Activated CD4-positive, alpha-beta T cell treated with anti-CD3 and anti-CD28 coated beads for 36 hours (primary cell): ENCODE measurements at regions of chr1 and their contacts with region 1.

Region 1: DNA sequence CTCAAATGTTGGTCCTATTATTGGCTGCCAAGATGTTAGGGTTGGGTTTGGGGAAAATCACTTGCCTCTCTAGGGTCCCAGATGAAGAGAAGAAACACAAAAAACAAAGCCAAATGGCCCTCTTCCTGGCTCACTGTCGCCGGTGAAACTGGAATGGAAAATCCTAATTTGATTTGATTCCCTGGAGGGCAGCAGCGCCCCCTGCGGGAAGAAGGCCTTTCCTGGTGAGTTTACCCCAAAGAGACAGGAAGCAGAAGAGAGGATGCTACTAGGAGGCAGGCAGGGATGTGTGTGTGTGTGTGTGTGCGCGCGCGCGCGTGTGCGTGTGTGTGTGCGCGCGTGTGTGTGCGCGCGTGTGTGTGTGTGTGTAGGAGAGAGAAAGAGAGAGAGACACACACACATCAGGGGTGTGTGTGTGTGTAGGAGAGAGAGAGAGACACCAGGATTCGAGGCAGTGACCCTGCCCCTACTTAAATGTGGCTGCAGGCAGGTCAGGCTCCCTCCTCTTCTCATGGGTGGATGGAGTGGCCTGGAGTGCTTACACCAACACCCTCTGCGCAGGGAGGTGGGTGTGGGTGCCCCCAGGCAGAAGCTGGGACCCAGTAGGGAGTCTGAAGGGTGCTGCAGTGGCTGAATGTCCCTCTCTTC is 3.1 kb upstream of the SELENON start:
- DNase-seq: peak; percentile 93
- ATAC-seq: peak; percentile 61
- H3K4me3 Mint-ChIP-seq: peak overlapping the region; percentile 56
- H3K27ac Mint-ChIP-seq: peak overlapping the region; percentile 95
- H3K4me1 Mint-ChIP-seq: peaks cover 62% of the 10 kb centered on the region
- H3K27me3 Mint-ChIP-seq: no peaks in the 10 kb centered on the region

Region 2: DNA sequence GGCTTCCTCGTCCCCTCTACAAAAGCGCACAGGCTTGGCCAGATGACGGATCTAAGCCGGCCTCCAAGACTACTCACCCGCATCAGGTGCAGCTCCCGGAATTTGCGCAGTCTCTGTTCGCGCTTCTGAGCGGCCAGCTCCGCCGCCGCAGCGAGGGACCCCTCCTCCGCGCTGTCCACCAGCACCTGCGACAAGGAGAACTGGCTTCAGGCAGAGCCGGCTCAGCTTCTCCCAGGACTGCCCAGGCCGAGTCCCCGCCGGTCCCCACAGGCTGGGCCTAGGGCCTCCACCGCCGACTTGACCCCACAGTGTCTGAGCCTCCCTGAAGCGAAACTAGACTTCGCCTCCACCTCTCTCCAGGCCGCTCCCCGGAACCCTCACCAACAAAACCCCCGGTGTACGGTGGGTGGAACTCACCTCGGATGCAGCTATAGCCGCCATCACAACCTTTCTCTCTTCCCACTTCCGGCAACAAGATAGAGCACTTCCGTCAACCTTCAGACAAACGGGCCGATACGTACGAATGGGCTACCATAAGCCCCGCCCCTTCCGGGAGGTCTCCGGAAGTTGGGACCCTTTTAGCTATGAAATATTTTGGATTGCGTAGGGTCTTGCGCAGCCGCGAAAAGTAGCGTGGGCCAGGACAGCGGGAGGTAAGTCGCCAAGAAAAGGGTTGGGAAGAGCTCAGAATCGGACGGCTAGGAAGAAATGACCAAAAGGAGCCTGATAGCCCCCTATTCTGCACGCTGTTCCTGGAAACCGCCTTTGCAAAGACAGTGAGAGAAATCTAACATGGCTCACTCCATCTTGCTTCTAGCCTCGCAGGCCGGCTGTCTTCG is 564.7 kb before region 1 on chr1 and contains the start of gene SYF2:
- CTCF ChIA-PET with region 1: no interaction called
- POLR2A ChIA-PET with region 1: no interaction called
- intact Hi-C with region 1: loop called in 1 of 2 experiments (anchors 5 kb)
- DNase-seq: peak; percentile 92
- ATAC-seq: peak; percentile 92
- H3K4me3 Mint-ChIP-seq: no peak within 1 kb of the TSS
- H3K27ac Mint-ChIP-seq: no peak within 1 kb of the TSS
- H3K4me1 Mint-ChIP-seq: peaks cover 26% of the 10 kb centered on the region
- H3K27me3 Mint-ChIP-seq: no peaks in the 10 kb centered on the region
- total RNA-seq, gene SYF2: 39.0 to 42.4 TPM

Region 3: DNA sequence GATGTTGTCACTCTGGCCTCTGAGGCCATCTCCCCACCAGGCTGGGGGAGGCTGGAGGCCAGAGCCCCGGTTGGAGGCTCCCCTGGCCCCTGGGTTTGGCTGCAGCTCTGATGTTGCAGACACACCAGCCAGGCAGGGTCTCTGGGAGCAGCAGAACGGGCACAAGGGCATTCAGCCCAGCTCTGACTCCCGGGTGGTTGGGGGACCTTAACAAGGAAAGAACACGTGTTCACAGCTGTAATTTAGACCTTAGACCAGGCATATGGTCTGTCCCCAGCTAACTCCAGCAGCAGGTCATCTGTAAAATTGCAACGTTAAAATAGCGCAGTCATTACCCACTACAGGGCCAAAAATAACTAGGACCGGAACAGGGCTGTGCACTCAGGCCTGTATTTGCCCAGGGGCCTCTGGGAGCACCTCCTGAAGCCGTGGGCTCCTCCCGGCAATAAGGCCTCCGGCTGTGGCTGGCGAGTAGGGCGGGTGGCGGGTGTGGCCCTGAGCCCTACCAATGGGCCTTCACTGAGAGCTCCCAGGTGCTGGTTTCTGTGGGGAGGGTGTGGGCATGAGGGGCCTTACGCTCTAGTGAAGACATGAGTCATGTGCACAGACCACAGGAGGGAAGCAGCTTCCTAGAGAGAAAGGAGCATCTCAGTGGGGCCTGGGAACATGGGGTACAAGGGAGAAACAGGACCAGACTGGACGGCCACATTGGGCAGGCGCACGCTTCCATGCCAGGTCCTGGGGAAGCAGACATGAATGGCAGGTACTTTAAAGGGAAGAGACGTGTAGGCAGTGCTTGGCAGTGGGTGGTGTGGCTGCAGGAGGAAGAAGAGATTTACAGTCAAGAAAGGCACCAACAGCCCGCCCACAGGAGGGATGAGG is 247.4 kb before region 1 on chr1:
- CTCF ChIA-PET with region 1: interaction called, 6 read pairs
- POLR2A ChIA-PET with region 1: interaction called, 3 read pairs
- intact Hi-C with region 1: loop called (anchors 5 kb)
- DNase-seq: peak; percentile 90
- ATAC-seq: peak; percentile 96
- H3K4me3 Mint-ChIP-seq: peak overlapping the region; percentile 69
- H3K27ac Mint-ChIP-seq: peak overlapping the region; percentile 98
- H3K4me1 Mint-ChIP-seq: peaks cover 90% of the 10 kb centered on the region
- H3K27me3 Mint-ChIP-seq: no peaks in the 10 kb centered on the region

Region 4: DNA sequence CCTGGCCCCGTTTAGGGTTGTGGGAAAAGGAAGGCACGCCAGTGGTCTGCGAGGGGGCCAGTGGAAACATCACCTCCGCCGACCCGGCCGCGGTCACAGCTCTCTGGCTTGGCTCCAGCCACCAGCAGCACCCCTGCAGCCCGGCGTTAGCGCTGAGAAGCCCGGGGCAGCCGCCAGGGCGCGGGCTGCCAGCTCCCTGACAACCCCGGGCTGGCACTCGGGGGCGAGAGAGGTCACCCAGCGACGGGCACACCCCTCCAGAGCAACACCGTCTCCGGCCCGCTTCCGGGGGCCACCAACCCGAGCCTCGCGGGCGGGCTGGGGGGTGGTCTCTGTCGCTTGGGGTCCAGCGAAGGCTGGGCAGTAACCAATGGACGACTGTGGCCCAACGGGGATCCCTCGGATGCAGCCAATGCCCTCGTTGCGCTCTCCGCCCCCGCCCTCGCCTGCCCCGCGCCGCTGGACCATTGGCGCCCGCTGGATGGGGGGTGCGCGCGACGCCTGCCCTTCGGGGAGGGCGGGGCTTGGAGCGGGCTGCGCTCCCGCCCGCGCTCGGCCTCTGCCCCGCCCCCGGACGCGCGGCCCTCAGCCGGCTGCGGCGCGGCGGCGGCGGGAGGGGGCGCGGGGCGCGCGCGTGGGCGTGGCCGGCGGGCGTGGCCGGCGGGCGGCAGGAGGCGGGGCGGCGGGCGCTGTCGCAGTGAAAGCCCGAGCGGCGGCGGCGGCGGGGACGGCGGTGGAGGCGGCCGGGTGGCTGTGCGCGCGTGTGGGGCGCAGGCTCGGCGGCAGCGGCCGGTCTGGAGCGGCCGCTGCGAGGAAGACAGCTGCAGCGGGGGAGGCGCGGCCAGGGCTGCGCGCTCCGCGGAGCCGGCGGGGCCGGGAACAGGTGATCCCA is 180.6 kb before region 1 on chr1 and contains the start of gene MAN1C1:
- CTCF ChIA-PET with region 1: interaction called, 38 read pairs
- POLR2A ChIA-PET with region 1: interaction called, 4 read pairs
- intact Hi-C with region 1: loop called (anchors 2 kb)
- DNase-seq: peak; percentile 85
- ATAC-seq: peak; percentile 60
- H3K4me3 Mint-ChIP-seq: peak within 1 kb of the TSS; percentile 76
- H3K27ac Mint-ChIP-seq: peak within 1 kb of the TSS; percentile 52
- H3K4me1 Mint-ChIP-seq: peaks cover 51% of the 10 kb centered on the region
- H3K27me3 Mint-ChIP-seq: peaks cover 11% of the 10 kb centered on the region
- total RNA-seq, gene MAN1C1: 10.0 to 10.1 TPM

Region 5: DNA sequence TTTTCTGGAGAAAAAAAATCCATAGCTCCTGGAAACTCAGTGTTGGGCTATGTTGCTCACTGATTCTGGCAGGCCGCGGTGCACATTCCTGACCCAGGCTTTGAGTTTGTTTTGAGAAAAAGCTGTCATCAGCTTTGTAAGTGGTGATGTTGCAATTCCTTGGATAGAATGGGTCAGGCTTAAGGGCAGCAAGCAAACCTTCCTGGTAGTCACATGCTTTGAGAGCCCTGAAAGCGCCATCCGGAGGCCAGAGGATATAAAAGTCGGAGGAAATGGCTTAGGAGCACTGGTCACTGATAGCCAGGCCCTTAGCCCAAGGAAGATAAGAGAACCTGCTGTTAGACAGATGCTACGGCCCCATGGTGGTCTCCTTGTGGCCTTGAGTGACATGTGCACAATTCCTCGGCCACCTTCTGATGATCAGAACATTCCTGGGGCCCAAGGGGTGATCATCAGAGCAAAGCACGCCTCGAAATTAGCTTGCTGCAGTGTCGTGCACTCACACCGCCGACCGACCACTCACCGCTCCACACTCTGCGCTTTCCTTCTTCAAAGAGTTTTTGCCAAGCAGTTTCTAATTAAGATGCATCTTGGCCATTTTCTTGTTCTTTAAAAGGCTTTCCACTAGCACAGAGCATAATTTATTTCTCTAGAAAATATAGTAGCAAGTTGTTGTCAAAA is 101.7 kb before region 1 on chr1:
- CTCF ChIA-PET with region 1: interaction called, 4 read pairs
- POLR2A ChIA-PET with region 1: no interaction called
- intact Hi-C with region 1: loop called in 1 of 2 experiments (anchors 5 kb)
- DNase-seq: no peak
- ATAC-seq: no peak
- H3K4me3 Mint-ChIP-seq: peak overlapping the region; percentile 43
- H3K27ac Mint-ChIP-seq: peak overlapping the region; percentile 70
- H3K4me1 Mint-ChIP-seq: peaks cover 56% of the 10 kb centered on the region
- H3K27me3 Mint-ChIP-seq: no peaks in the 10 kb centered on the region

Region 6: DNA sequence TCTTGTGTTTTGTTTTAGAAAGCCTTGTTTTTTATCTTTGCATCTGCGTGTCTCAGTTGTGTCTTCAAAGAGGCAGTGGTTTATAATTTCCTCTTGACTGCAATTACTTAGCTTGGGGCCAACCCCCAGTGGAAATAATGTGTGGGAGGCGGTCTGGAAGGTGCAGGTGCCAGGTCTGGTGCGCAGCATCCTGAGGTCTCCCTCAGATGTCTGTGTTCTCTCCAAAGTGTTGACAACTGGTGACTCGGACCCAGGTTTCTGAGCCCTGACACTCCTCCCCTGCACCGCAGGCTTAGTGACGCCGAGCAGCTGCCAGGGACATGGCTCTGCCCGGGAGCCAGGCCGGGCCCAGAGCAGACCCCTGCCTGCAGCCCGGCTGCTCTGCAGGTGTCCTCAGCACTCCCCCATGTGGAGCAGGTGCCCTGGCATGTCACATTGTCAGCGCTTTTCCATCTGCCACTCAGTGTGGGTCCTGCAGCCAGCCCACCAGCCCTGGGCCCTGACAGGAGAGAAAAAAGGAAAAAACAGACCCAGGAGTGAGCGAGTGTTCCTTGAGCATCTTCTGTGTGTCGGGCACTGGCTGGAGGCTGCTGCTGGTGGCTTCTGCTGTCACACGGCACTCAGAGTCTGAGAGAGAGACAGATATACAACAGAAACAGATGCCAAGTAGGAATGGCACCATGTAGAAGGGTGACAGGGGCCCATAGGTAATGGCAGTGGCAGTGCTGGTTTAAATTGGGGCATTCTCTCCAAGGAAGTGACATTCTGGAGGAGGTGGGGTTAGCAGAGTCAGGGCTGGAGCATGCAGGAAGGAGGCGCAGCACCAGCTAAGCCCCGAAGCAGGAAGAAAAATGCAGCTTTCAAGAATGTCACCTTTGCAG is 21.8 kb before region 1 on chr1:
- CTCF ChIA-PET with region 1: interaction called, 6 read pairs
- POLR2A ChIA-PET with region 1: interaction called, 3 read pairs
- intact Hi-C with region 1: loop called in 1 of 2 experiments (anchors 1 kb)
- DNase-seq: peak; percentile 94
- ATAC-seq: peak; percentile 85
- H3K4me3 Mint-ChIP-seq: peak overlapping the region; percentile 57
- H3K27ac Mint-ChIP-seq: peak overlapping the region; percentile 84
- H3K4me1 Mint-ChIP-seq: peaks cover 80% of the 10 kb centered on the region
- H3K27me3 Mint-ChIP-seq: no peaks in the 10 kb centered on the region

Region 7: DNA sequence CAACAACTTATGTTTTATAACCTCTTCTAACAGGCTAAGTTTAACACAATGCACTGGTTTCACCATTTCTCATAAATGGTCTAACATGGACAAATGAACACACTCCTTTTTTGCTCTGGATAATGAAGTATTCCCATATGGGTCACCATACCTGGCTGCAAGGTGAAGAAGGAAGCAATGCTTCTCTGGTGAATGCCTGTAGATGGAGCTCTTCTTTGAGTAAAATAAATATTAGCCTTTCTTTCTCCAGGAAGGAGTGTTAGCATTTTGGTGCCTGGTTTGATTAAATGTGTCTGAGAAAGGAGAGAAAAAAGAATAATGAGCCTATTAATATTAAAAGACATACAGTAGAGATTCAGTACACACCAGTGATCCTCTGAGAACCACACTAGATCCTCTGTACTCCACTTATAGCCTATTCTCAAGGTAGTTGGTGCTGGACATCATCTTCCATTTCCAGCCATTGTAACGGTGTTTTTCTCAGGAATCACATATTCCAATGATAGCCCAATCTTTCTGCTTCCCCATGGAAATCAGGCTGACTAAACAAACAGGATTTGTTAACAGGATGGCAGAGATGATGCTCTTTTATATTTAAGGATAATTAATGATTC is 40.4 kb after region 1 on chr1:
- CTCF ChIA-PET with region 1: no interaction called
- POLR2A ChIA-PET with region 1: no interaction called
- intact Hi-C with region 1: no loop called
- DNase-seq: no peak
- ATAC-seq: no peak
- H3K4me3 Mint-ChIP-seq: no peak overlapping the region
- H3K27ac Mint-ChIP-seq: no peak overlapping the region
- H3K4me1 Mint-ChIP-seq: peaks cover 4% of the 10 kb centered on the region
- H3K27me3 Mint-ChIP-seq: no peaks in the 10 kb centered on the region